ENCODE measurements at regions of chr3 and their contacts with region 1.

Region 1: DNA sequence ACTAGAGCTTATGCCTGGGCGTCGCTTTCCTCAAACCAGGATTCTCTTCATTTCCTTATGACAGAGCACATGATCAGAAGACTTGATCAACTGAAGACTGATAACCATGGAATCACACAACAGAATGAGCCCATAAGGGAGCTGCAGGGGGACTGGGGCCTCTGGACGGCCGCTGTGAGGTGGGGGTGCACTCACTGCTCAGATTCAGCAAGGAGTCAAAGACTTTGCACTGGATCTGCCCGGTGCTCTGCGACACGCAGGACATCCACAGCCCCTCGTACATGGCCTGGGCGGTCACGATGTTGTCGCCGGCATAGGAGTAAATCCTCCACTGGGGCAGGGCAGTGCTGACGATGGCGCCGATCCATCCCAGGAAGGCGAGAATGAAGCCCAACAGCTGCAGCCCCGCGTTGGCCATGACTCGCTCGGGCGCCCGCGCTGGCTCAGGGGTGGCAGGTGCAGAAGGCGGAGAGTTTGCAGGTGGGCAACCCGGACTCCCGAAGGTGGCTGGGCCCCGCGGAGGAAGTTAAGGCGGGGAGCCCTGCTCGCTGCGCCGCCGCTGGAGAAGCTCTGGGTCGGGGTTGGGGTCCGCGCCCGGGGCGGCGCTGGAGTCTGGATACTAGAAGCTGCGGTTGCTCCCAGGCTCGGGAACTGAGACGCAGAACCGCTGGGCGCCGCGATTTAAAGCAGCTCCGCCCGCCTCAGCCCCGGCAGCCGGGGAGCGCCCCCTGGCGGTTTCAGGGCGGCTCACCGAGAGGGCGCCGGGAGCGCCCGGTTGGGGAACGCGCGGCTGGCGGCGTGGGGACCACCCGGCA is at the start of gene CLDN1:
- DNase-seq: peak; percentile 2
- H3K4me3 ChIP-seq: peak within 1 kb of the TSS; percentile 49 to 85 (median 73)
- H3K27ac ChIP-seq: peak within 1 kb of the TSS; percentile 64 to 90 (median 81)
- H3K4me1 ChIP-seq: peaks cover 0 to 70% (median 12%) of the 10 kb centered on the region in 3 donors
- H3K27me3 ChIP-seq: peaks cover 0 to 3% (median 0%) of the 10 kb centered on the region in 4 donors
- CTCF ChIP-seq: peak; percentile 79 to 97 (median 94)
- POLR2A ChIP-seq: peak in 2 of 4 donors; percentile 40 to 72
- total RNA-seq, gene CLDN1: 34.8 to 59.6 (median 45.4) TPM

Region 2: GRCh38 chr3:189967254-189967865 is 354.6 kb before region 1 on chr3:
- intact Hi-C with region 1: loop called (anchors 5 kb)
- DNase-seq: no peak
- H3K4me3 ChIP-seq: no peak overlapping the region
- H3K27ac ChIP-seq: no peak overlapping the region
- H3K4me1 ChIP-seq: peaks cover 0 to under 1% (median 0%) of the 10 kb centered on the region in 3 donors
- H3K27me3 ChIP-seq: no peaks in the 10 kb centered on the region
- CTCF ChIP-seq: peak; percentile 69 to 91 (median 84)
- POLR2A ChIP-seq: no peak

Region 3: DNA sequence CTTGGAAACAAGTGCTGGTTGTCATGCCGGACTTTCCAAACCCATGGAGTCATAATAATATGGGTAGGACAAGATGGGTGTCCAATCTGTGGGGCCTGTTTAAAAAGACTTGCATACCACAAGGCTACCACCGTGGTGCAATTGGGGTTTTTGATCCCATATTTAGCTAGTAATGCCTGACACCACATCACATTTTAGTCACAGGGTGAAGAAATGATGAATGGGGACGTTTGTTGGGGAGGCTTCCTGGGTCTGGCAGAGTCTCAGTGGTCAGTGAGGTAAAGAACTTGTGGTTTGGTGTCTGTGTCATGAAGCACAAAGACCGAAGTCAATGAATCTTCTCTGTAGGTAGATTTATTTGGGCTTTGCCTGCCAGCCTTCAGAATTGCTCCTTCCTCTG is 232.3 kb before region 1 on chr3:
- intact Hi-C with region 1: no loop called
- DNase-seq: no peak
- H3K4me3 ChIP-seq: no peak overlapping the region
- H3K27ac ChIP-seq: no peak overlapping the region
- H3K4me1 ChIP-seq: peaks cover 0 to 24% (median 6%) of the 10 kb centered on the region in 3 donors
- H3K27me3 ChIP-seq: no peaks in the 10 kb centered on the region
- CTCF ChIP-seq: no peak
- POLR2A ChIP-seq: no peak

Region 4: DNA sequence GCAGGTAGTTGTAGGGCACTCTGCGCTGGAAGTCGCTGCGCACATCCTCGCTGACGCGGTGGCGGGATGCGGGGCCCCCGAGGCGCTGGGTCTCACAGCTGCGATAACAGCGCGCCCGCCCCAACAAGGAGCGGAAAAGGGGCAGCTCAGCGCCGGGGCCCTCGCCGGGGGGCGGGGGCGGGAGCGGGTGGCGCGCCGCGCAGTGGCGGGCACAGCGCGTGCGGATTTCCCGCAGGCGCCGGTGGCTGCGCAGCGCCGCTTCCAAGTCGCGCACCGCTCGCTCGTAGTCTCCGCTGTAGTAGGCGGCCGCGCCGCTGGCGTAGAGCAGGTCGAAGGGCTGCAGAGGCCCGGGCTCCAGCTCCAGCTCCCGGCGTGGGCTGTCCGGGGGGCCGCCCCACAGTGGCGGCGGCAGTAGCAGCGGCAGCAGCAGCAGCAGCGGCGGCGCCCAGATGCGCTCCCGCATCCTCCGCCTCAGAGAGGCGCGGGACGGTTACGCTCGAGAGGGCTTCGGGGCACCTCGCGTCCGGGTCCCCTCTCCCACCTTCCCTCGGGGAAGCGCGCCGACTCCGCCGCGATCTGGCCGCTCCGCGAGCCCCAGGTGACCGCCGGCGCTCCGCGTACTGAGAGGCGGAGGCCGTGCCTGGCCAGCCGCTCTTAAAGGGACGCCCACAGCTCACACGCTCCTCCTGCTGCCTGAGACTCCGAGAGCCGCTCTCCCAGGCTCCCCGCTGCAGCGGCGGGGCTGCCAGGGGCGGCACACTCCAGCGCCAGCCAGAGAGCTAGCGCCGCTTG is 201.5 kb before region 1 on chr3 and contains the start of gene P3H2:
- intact Hi-C with region 1: no loop called
- DNase-seq: no peak
- H3K4me3 ChIP-seq: peak within 1 kb of the TSS; percentile 68 to 95 (median 76)
- H3K27ac ChIP-seq: peak within 1 kb of the TSS; percentile 81 to 90 (median 86)
- H3K4me1 ChIP-seq: peaks cover 7 to 58% (median 9%) of the 10 kb centered on the region in 3 donors
- H3K27me3 ChIP-seq: peaks cover 0 to 9% (median 0%) of the 10 kb centered on the region in 4 donors
- CTCF ChIP-seq: peak in 5 of 6 experiments; percentile 35 to 54 (median 44)
- POLR2A ChIP-seq: peak in 1 of 4 donors; percentile 50
- total RNA-seq, gene P3H2: 16.5 to 41.2 (median 34.0) TPM

Region 5: GRCh38 chr3:190224863-190225692 is 96.9 kb before region 1 on chr3:
- intact Hi-C with region 1: loop called (anchors 10 kb)
- DNase-seq: no peak
- H3K4me3 ChIP-seq: no peak overlapping the region
- H3K27ac ChIP-seq: no peak overlapping the region
- H3K4me1 ChIP-seq: peaks cover 0 to 3% (median 0%) of the 10 kb centered on the region in 3 donors
- H3K27me3 ChIP-seq: no peaks in the 10 kb centered on the region
- CTCF ChIP-seq: peak in 4 of 6 experiments; percentile 27 to 60 (median 48)
- POLR2A ChIP-seq: no peak

Region 6: GRCh38 chr3:190432216-190432615 is 110.2 kb after region 1 on chr3:
- intact Hi-C with region 1: no loop called
- DNase-seq: no peak
- H3K4me3 ChIP-seq: no peak overlapping the region
- H3K27ac ChIP-seq: no peak overlapping the region
- H3K4me1 ChIP-seq: no peaks in the 10 kb centered on the region
- H3K27me3 ChIP-seq: no peaks in the 10 kb centered on the region
- CTCF ChIP-seq: no peak
- POLR2A ChIP-seq: no peak

Measured in esophagus squamous epithelium (tissue), 5 donors.